Naive thymus-derived CD4-positive, alpha-beta T cell (primary cell): ENCODE measurements at regions of chr3 and their contacts with region 1.

Region 1: DNA sequence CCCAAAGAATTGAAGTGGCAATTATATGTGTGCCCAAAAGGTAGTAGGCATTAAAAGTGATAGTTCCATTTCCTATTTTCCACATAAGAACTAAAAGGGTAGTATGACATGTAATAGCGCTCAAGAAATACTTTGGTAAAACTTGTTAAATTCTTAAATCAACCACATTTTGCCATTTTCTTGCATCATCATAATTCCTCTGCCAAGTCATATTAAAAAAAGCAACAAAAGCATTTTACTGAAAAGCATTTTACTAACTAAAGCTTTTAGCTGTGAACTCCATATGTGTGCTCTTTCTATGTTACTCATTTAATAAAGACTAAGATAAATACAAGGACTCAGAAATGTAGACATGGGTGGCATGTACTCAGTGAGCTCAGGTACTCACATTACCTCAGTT is 70.1 kb downstream of the GPR160 start:
- DNase-seq: no peak
- ATAC-seq: no peak
- H3K4me3 ChIP-seq: no peak overlapping the region
- H3K4me3 Mint-ChIP-seq: no peak overlapping the region
- H3K27ac ChIP-seq: no peak overlapping the region
- H3K27ac Mint-ChIP-seq: peak overlapping the region in 3 of 9 donors; percentile 13 to 50 (median 44)
- H3K4me1 ChIP-seq: peaks cover 0 to 12% of the 10 kb centered on the region in 2 donors
- H3K4me1 Mint-ChIP-seq: peaks cover 17 to 45% (median 31%) of the 10 kb centered on the region in 7 donors
- H3K27me3 ChIP-seq: no peaks in the 10 kb centered on the region
- H3K27me3 Mint-ChIP-seq: no peaks in the 10 kb centered on the region

Region 2: DNA sequence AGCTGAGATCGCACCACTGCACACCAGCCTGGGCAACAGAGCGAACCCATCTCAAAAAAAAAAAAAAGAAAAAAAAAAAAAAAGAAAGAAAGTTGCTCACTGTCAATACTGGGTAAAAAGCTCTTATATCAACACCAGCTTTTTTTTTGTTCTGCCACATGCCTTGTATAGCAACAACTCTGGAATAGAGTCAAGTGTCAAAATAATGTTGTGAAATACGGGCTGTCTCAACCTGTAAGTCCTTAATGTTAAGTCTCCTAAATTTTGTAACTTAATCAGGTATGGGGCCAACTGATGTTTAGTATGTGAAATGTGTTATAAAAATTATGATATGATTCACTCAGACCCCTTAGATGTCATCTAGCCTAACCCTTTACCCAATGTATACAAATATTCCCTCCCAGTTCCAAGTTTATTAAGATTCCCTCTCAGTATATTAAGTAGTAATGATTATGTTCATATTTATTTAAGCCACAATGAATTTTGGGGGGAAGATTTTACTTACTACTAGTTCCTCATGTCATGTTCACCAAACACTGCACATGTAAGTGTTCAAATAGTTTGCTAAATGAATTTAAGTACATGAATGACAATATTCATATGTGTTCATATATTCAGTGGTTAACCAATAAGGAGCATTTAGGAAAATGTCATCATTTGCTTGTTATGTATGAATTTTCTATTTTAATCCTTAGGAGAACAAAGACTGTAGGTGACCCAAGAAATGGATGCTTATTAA is 17.9 kb before region 1 on chr3:
- CTCF ChIA-PET with region 1: no interaction called
- POLR2A ChIA-PET with region 1: interaction called, 3 read pairs
- intact Hi-C with region 1: loop called in 1 of 2 experiments (anchors 2 kb)
- DNase-seq: no peak
- ATAC-seq: no peak
- H3K4me3 ChIP-seq: no peak overlapping the region
- H3K4me3 Mint-ChIP-seq: no peak overlapping the region
- H3K27ac ChIP-seq: peak overlapping the region; percentile 9
- H3K27ac Mint-ChIP-seq: peak overlapping the region in 7 of 9 donors; percentile 3 to 65 (median 54)
- H3K4me1 ChIP-seq: no peaks in the 10 kb centered on the region
- H3K4me1 Mint-ChIP-seq: peaks cover 0 to 19% (median 9%) of the 10 kb centered on the region in 7 donors
- H3K27me3 ChIP-seq: no peaks in the 10 kb centered on the region
- H3K27me3 Mint-ChIP-seq: no peaks in the 10 kb centered on the region

Region 3: GRCh38 chr3:170128977-170129431 is 21.1 kb after region 1 on chr3:
- CTCF ChIA-PET with region 1: no interaction called
- POLR2A ChIA-PET with region 1: interaction called, 4 read pairs
- intact Hi-C with region 1: loop called in 1 of 2 experiments (anchors 2 kb)
- DNase-seq: no peak
- ATAC-seq: peak; percentile 52
- H3K4me3 ChIP-seq: no peak overlapping the region
- H3K4me3 Mint-ChIP-seq: peak overlapping the region; percentile 53 to 89 (median 75)
- H3K27ac ChIP-seq: peak overlapping the region; percentile 40
- H3K27ac Mint-ChIP-seq: peak overlapping the region; percentile 50 to 88 (median 73)
- H3K4me1 ChIP-seq: peaks cover 0 to 9% of the 10 kb centered on the region in 2 donors
- H3K4me1 Mint-ChIP-seq: peaks cover 13 to 71% (median 42%) of the 10 kb centered on the region in 7 donors
- H3K27me3 ChIP-seq: no peaks in the 10 kb centered on the region
- H3K27me3 Mint-ChIP-seq: no peaks in the 10 kb centered on the region

Region 4: DNA sequence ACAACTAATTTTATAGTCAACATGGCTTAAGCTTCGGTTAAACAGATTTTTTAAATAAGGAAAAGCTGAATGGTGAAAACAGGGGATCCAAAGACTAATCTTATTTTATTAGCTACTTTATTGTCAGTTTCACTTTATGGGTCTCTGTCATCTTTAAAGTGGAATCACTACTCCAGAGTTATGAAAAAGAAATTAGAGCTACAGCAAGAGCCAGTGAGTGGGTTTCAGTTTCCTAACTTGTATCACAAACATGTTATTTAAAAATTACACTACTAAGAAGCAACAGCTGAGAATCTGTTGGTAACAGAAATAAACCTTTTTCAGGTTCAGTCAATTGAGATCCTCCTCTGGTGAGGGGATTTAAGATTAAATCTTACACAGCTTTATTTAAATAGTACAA is 63.6 kb after region 1 on chr3:
- CTCF ChIA-PET with region 1: no interaction called
- POLR2A ChIA-PET with region 1: interaction called, 3 read pairs
- intact Hi-C with region 1: loop called in 1 of 2 experiments (anchors 5 kb)
- DNase-seq: peak in 1 of 9 donors; percentile 9
- ATAC-seq: no peak
- H3K4me3 ChIP-seq: no peak overlapping the region
- H3K4me3 Mint-ChIP-seq: peak overlapping the region in 7 of 10 donors; percentile 21 to 67 (median 54)
- H3K27ac ChIP-seq: no peak overlapping the region
- H3K27ac Mint-ChIP-seq: peak overlapping the region; percentile 56 to 95 (median 73)
- H3K4me1 ChIP-seq: peaks cover 27 to 35% of the 10 kb centered on the region in 2 donors
- H3K4me1 Mint-ChIP-seq: peaks cover 32 to 80% (median 74%) of the 10 kb centered on the region in 7 donors
- H3K27me3 ChIP-seq: no peaks in the 10 kb centered on the region
- H3K27me3 Mint-ChIP-seq: no peaks in the 10 kb centered on the region